Breast epithelium (tissue), 4 donors: ENCODE measurements at regions of chr4 and their contacts with region 1.

Region 1: DNA sequence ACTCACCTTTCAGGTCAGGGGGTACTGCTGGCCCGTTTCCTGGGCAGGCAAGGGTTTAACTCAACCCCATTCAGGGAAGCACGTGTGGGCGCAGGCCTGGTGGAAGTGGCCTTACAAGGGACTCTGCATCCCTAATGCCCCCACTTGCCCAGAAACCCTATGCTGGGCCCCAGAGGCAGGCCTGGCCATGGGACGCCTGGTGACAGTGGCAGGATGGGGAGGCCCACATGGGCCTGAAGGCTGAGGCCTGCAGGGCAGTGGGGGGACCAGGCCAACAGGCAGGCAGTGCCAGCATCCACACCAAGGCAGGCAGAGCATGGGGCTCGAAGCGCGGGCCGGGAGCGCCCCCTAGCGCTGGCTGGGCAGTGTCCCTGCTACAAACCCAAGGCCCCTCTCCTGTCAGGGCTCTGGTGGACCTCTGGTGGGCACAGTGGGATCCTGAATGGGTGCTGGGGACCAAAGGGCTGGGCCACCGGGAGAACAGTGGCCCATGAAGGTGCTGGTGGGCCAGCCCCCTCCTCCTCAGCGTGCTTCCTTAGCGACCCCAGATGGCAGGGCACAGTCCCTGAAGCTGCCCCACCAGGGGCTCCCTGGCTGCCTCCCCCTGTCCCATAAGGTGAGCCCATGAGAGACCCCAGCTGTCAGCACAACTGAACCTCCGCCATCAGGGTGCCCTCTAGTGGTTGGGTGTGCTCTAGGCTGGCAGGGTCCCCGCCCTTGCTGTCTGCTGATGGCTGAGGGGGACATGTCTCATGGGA is 16.8 kb downstream of the FGFR3 start:
- DNase-seq: no peak
- H3K4me3 ChIP-seq: no peak overlapping the region
- H3K27ac ChIP-seq: no peak overlapping the region
- H3K4me1 ChIP-seq: no peaks in the 10 kb centered on the region
- H3K27me3 ChIP-seq: no peaks in the 10 kb centered on the region
- CTCF ChIP-seq: peak in 2 of 3 donors; percentile 47
- POLR2A ChIP-seq: no peak

Region 2: DNA sequence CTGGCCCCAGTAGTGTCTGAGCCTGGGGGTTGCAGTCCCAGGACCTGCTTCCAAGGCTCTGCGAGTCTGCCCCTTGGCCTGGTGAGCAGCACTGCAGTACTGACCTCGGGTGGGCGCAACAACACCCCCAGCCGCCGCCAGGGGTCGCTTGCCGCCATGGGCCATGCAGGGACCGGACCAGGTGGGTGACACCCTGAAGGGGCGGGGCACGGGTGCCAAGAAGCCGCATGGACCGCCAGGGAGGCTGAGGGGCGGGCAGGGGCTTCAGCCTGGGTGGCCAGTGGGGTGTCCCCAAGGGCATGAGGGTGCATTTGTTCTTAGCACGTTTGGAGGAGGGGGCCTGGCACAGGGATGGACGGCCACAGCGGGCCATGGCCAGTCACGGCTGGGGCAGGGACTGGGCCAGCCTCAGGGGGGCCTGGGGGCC is 63.7 kb before region 1 on chr4:
- intact Hi-C with region 1: loop called (anchors 5 kb)
- DNase-seq: peak; percentile 44 to 70
- H3K4me3 ChIP-seq: no peak overlapping the region
- H3K27ac ChIP-seq: no peak overlapping the region
- H3K4me1 ChIP-seq: no peaks in the 10 kb centered on the region
- H3K27me3 ChIP-seq: no peaks in the 10 kb centered on the region
- CTCF ChIP-seq: peak; percentile 30 to 68 (median 67)
- POLR2A ChIP-seq: no peak

Region 3: GRCh38 chr4:1842993-1843448 is 33.1 kb after region 1 on chr4:
- intact Hi-C with region 1: no loop called
- DNase-seq: no peak
- H3K4me3 ChIP-seq: no peak overlapping the region
- H3K27ac ChIP-seq: no peak overlapping the region
- H3K4me1 ChIP-seq: no peaks in the 10 kb centered on the region
- H3K27me3 ChIP-seq: no peaks in the 10 kb centered on the region
- CTCF ChIP-seq: no peak
- POLR2A ChIP-seq: no peak

Region 4: DNA sequence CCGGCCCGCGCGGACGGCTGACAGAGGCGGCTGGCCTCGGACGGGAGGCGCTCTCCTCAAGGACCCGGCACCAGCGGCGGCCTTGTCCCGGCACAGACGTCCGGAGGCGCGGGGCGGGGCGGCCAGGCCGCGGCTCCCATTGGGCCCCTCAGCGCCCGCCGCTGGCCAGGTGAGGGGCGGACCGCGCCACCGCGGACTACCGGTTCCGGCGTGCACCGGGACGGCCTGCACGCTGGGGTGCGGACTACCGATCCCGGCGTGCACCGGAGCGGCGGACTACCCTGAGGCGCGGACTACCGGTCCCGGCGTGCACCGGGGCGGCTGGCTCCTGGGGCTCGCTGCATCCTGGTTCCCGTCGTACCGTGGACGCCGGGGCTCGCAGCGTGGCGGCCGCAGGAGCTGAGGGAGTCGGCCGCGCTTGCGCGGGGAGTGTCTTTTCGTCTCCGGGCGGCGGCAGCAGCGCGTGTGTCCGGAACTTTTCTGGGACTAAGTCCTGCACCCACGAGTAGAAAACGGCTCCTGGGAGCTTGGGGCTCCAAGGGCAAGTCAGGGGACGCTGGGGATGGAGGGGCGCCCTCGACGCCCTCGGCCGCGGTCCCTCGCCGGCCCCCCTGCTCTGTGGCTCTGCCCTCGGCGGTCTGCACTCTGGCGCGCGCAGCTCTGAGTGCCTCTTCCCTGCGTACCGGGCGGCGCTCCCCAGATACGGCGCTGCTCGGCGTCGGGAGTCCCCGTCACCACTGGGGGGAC is 46.3 kb after region 1 on chr4 and contains the start of gene LETM1:
- intact Hi-C with region 1: no loop called
- DNase-seq: peak; percentile 95 to 96
- H3K4me3 ChIP-seq: peak within 1 kb of the TSS; percentile 87 to 98 (median 91)
- H3K27ac ChIP-seq: peak within 1 kb of the TSS; percentile 77 to 82
- H3K4me1 ChIP-seq: no peaks in the 10 kb centered on the region
- H3K27me3 ChIP-seq: no peaks in the 10 kb centered on the region
- CTCF ChIP-seq: no peak
- POLR2A ChIP-seq: peak; percentile 34
- total RNA-seq, gene LETM1: 31.0 to 42.9 (median 32.5) TPM

Region 5: DNA sequence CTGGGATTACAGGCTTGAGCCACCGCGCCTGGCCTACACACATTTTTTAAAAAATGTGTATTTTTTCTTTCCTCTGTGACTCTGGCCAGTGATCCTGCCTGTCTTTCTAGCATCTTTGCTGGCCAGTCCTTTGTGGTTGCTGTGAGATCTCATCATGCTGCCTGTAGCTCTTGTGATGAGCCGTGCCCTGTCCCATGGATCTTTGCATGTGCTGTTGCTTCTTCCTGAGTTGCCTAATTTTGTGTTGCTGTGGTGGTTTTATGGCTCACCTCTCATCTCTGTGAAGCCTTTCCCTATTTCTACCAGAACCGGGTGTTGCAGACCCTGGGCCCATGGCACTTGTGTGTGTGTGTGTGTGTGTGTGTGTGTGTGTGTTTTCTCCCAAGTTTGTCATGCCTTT is 69.6 kb after region 1 on chr4:
- intact Hi-C with region 1: no loop called
- DNase-seq: no peak
- H3K4me3 ChIP-seq: no peak overlapping the region
- H3K27ac ChIP-seq: no peak overlapping the region
- H3K4me1 ChIP-seq: no peaks in the 10 kb centered on the region
- H3K27me3 ChIP-seq: no peaks in the 10 kb centered on the region
- CTCF ChIP-seq: no peak
- POLR2A ChIP-seq: no peak